GM12878 (cell line): ENCODE measurements at regions of chr7 and their contacts with region 1.

Region 1: DNA sequence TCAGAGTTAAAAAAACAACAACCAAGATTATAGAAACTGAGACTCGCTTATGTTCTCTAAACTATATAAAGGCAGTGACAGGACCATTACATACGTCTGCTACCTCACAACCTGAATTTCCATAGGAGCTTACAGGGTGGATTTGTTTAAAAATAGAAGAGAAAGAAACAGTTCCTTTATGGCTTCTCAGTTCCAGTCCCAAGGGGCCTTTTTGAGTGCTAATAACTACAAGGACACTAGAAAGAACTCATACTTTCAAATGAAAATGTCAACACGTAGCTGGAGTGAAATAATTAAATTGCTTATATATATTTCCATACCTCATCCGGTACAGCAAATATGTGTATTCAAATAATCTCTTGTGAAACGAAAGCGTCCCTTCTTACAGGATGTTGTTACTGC is 19.7 kb downstream of the TSPAN12 start:
- DNase-seq: peak; percentile 68
- ATAC-seq: peak; percentile 76
- H3K4me3 ChIP-seq: no peak overlapping the region
- H3K27ac ChIP-seq: peak overlapping the region; percentile 39
- H3K4me1 ChIP-seq: peaks cover 7% of the 10 kb centered on the region; the same call in 1 of the 2 replicates
- H3K27me3 ChIP-seq: no peaks in the 10 kb centered on the region
- CTCF ChIP-seq: no peak
- EP300 ChIP-seq: peak; percentile 55 to 56; a peak in 3 of 4 replicates
- POLR2A ChIP-seq: no peak
- RAD21 ChIP-seq: no peak

Region 2: GRCh38 chr7:120825576-120825975 is 12.7 kb before region 1 on chr7:
- CTCF ChIA-PET with region 1: interaction called, 6 read pairs
- POLR2A ChIA-PET with region 1: interaction called, 25 read pairs
- RAD21 ChIA-PET with region 1: interaction called, 19 read pairs
- SMC1A ChIA-PET with region 1: interaction called, 22 read pairs
- in situ Hi-C with region 1: no loop called
- intact Hi-C with region 1: no loop called
- DNase-seq: no peak
- ATAC-seq: no peak
- H3K4me3 ChIP-seq: no peak overlapping the region
- H3K27ac ChIP-seq: no peak overlapping the region
- H3K4me1 ChIP-seq: no peaks in the 10 kb centered on the region
- H3K27me3 ChIP-seq: no peaks in the 10 kb centered on the region
- CTCF ChIP-seq: no peak
- EP300 ChIP-seq: no peak
- POLR2A ChIP-seq: no peak
- RAD21 ChIP-seq: no peak

Region 3: GRCh38 chr7:120852700-120853099 is 14.4 kb after region 1 on chr7:
- CTCF ChIA-PET with region 1: interaction called, 20 read pairs
- POLR2A ChIA-PET with region 1: interaction called, 55 read pairs
- RAD21 ChIA-PET with region 1: interaction called, 63 read pairs
- SMC1A ChIA-PET with region 1: interaction called, 122 read pairs
- in situ Hi-C with region 1: no loop called
- intact Hi-C with region 1: loop called (anchors 1 kb)
- DNase-seq: no peak
- ATAC-seq: no peak
- H3K4me3 ChIP-seq: no peak overlapping the region
- H3K27ac ChIP-seq: no peak overlapping the region
- H3K4me1 ChIP-seq: no peaks in the 10 kb centered on the region
- H3K27me3 ChIP-seq: no peaks in the 10 kb centered on the region
- CTCF ChIP-seq: no peak
- EP300 ChIP-seq: no peak
- POLR2A ChIP-seq: no peak
- RAD21 ChIP-seq: no peak

Region 4: DNA sequence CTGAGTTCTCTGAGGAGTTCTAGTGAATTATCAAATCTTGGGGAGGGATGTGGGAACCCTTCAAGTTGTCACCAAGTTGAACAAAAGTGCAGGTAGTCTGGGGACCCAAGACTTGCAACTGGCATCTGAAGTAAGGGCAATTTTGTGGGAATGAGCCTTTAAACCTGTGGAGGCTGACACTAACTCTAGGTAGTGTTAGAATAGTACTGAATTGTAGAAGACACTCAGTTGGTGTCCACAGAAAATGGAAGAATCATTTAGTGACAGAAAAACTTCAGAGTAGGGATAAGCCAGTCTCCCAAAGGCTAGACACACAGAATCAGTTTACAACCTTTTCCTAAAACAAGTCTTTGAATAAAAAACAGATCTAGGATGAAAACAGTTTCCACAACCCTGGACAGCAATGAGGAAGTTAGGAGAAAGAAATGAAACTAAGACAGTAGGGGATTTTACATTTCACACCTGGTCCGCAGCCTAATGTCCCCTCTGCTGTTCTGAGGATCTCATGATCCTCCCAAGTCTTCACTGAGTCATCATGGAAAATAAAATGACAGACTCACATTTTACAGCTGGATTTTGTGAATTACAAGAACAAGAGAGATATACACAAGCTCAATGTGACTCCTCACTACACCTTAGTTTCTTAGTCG is 89.3 kb after region 1 on chr7:
- CTCF ChIA-PET with region 1: interaction called, 4 read pairs
- POLR2A ChIA-PET with region 1: interaction called, 5 read pairs
- RAD21 ChIA-PET with region 1: interaction called, 5 read pairs
- SMC1A ChIA-PET with region 1: interaction called, 11 read pairs
- in situ Hi-C with region 1: no loop called
- intact Hi-C with region 1: no loop called
- DNase-seq: peak; percentile 46
- ATAC-seq: peak; percentile 90
- H3K4me3 ChIP-seq: no peak overlapping the region
- H3K27ac ChIP-seq: peak overlapping the region; percentile 46; the same call in 1 of the 2 replicates
- H3K4me1 ChIP-seq: peaks cover 4% of the 10 kb centered on the region; the same call in 1 of the 2 replicates
- H3K27me3 ChIP-seq: no peaks in the 10 kb centered on the region
- CTCF ChIP-seq: no peak
- EP300 ChIP-seq: 0 out of 4 replicates have a peak, but pooled peaks of 1 of the 2 experiments have one; percentile 40
- POLR2A ChIP-seq: no peak
- RAD21 ChIP-seq: no peak

Region 5: DNA sequence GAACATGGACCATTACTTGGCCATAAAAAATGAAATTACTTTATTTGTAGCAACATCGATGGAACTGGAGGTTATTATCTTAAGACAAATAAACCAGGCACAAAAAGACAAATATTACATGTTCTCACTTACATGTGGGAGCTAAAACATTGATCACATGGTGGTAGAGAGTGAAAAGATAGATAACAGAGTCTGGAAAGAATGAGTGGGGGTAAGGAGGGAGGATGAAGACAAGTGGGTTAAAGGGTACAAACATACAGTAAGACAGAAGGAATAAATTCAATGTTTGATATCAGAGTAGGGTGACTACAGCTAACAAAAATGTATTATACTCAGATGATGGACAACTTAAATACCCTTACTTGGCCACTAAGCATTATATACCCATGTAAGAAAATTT is 390.5 kb after region 1 on chr7:
- CTCF ChIA-PET with region 1: no interaction called
- POLR2A ChIA-PET with region 1: no interaction called
- RAD21 ChIA-PET with region 1: no interaction called
- SMC1A ChIA-PET with region 1: no interaction called
- in situ Hi-C with region 1: no loop called
- intact Hi-C with region 1: no loop called
- DNase-seq: no peak
- ATAC-seq: no peak
- H3K4me3 ChIP-seq: no peak overlapping the region
- H3K27ac ChIP-seq: no peak overlapping the region
- H3K4me1 ChIP-seq: no peaks in the 10 kb centered on the region
- H3K27me3 ChIP-seq: no peaks in the 10 kb centered on the region
- CTCF ChIP-seq: no peak
- EP300 ChIP-seq: no peak
- POLR2A ChIP-seq: no peak
- RAD21 ChIP-seq: no peak

Region 6: GRCh38 chr7:121379930-121380329 is 541.6 kb after region 1 on chr7:
- CTCF ChIA-PET with region 1: no interaction called
- POLR2A ChIA-PET with region 1: no interaction called
- RAD21 ChIA-PET with region 1: no interaction called
- SMC1A ChIA-PET with region 1: no interaction called
- in situ Hi-C with region 1: no loop called
- intact Hi-C with region 1: no loop called
- DNase-seq: no peak
- ATAC-seq: no peak
- H3K4me3 ChIP-seq: no peak overlapping the region
- H3K27ac ChIP-seq: no peak overlapping the region
- H3K4me1 ChIP-seq: peaks cover 25% of the 10 kb centered on the region
- H3K27me3 ChIP-seq: no peaks in the 10 kb centered on the region
- CTCF ChIP-seq: no peak
- EP300 ChIP-seq: no peak
- POLR2A ChIP-seq: no peak
- RAD21 ChIP-seq: no peak